GM10248 (cell line): ENCODE measurements at regions of chr2 and their contacts with region 1.

Region 1: GRCh38 chr2:73970850-73971471 is 13.7 kb upstream of the TET3 start:
- DNase-seq: peak; percentile 55
- CTCF ChIP-seq: no peak

Region 2: DNA sequence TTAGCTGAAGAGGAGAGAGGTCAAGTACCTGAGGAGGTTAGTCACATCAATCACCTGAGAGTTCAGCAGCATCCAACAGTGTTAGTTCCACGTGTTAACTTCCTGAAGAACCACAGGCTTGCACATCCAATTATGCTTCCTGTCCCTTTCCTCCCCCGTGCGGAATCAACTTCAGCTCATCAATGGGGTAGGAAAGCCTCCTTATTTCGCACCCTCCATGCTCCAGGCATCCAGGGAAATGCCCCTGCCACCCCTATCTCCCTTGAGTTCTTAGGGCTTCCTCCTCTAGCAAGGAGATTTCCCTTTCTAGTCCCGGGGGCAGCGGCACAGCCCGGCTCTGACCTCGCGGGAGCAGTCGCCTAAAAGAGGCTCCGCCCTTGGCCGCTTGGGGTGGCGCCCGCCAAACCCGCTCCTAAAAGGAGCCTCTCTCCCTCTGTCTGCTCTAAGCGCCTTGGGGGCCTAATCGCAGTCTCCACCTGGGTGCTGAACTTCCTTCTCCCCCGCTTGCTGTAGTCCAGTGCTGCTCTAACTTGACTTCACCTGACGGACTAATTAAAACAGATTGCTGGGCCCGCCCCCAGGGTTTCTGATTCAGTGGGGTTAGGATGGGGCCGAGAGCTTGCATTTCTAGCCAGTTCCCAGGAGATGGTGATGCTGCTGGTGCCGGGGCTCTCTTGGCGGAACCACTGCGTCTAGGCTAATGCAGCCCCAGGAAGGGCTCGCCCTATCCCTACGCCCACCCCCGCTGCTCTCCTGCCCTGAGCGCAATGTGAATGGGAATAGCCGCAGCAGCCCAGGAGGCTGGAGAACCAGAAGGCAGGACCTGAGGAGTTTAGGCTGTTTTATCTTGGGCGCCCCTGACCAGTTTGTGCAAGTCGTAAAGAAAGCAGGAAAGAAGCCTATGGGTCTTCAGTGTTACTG is 10.4 kb after region 1 on chr2:
- CTCF ChIA-PET with region 1: interaction called, 15 read pairs
- POLR2A ChIA-PET with region 1: interaction called, 3 read pairs
- DNase-seq: peak; percentile 70
- CTCF ChIP-seq: no peak

Region 3: DNA sequence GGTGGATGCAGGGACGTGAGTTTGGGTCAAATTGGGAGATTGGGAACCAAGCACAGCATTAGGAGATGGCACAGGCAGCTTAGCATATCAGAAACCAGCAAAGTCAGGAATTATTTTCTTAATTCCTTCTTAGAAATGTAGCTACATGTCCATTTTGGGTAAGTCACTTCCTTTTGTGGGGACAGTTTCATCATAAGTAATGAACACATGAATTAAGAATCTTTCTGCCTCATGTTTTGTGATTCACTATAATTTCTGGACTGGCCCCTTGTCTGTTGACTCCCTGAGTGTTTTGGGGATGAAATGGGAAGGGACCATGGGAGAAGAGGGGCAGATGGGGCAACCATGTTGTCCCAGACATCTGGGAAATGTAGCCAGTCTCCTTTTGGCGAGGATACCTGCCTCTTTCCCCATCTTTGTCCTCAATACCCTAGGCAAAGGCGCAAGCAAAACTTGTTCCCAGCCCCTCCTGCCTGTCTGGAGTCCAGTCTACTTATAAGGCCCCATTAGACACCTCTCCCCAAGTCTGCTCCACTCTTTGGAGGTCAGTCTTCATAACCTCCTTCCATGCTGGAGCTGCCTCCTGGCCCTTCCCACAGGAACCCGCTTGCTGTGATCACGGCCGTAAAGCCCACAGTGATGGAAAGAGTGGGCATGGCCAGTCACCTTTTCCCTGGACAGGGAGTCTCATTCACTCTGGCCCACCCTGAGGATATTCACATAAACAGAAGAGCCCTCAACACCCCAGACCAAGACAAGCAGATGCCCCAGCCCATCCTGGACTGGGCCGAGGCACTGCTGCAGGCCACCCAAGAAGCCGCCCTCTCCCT is 253.2 kb after region 1 on chr2:
- CTCF ChIA-PET with region 1: no interaction called
- POLR2A ChIA-PET with region 1: no interaction called
- DNase-seq: no peak
- CTCF ChIP-seq: no peak